Activated CD8-positive, alpha-beta memory T cell treated with anti-CD3 and anti-CD28 coated beads, Interleukin-2, amount 10 ng/mL, durations not matched to agents 7 days and 5 days (primary cell): ENCODE measurements at regions of chr5 and their contacts with region 1.

Region 1: GRCh38 chr5:179623003-179623880 is at the start of gene HNRNPH1:
- DNase-seq: peak; percentile 99
- ATAC-seq: peak; percentile 73
- H3K4me3 Mint-ChIP-seq: peak within 1 kb of the TSS; percentile 96
- H3K27ac Mint-ChIP-seq: peak within 1 kb of the TSS; percentile 100
- H3K4me1 Mint-ChIP-seq: peaks cover 39% of the 10 kb centered on the region
- H3K27me3 Mint-ChIP-seq: peaks cover 3% of the 10 kb centered on the region
- total RNA-seq, gene HNRNPH1: 811 to 1,007 TPM

Region 2: GRCh38 chr5:179610109-179610902 is 12.9 kb before region 1 on chr5:
- CTCF ChIA-PET with region 1: interaction called, 35 read pairs
- DNase-seq: no peak
- ATAC-seq: no peak
- H3K4me3 Mint-ChIP-seq: no peak overlapping the region
- H3K27ac Mint-ChIP-seq: no peak overlapping the region
- H3K4me1 Mint-ChIP-seq: peaks cover 54% of the 10 kb centered on the region
- H3K27me3 Mint-ChIP-seq: no peaks in the 10 kb centered on the region

Region 3: DNA sequence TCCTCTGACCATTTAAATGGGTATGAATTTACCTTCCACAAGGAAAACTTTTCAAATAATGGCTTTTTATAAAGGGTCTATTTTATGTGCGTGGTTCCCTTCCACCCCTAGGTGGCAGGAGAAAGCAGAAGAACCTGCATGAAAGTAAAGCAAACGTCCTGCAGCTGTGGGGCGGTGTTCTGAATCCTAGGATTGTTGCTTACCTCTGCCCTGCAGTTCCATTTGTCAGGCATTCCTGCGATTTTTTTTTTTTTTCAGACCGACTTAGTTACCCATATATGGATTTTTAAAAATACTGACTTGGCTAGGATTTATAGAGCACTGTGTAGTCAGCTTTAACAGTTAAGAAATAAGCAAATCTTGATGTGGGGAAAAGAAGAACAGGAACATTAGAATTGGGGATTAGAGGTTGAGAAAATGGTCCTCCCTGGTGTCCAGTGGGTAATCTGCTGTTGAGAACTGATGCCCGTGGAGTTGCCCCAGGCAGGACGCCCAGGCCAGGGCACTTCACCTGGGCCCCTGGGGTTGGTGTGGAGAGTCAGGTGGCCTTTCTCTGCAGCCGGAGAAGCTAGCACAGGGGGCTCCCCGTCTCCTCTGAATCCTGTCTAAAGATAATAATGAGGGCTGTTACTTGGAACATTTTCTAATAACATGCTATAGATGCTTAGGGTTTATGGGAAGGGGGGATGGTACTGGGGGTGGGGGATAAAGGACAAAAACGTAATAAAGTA is 140.1 kb after region 1 on chr5:
- CTCF ChIA-PET with region 1: no interaction called
- DNase-seq: peak; percentile 68
- ATAC-seq: peak; percentile 66
- H3K4me3 Mint-ChIP-seq: no peak overlapping the region
- H3K27ac Mint-ChIP-seq: no peak overlapping the region
- H3K4me1 Mint-ChIP-seq: peaks cover 47% of the 10 kb centered on the region
- H3K27me3 Mint-ChIP-seq: no peaks in the 10 kb centered on the region